K562 (cell line): ENCODE measurements at regions of chr2 and their contacts with region 1.

Region 1: DNA sequence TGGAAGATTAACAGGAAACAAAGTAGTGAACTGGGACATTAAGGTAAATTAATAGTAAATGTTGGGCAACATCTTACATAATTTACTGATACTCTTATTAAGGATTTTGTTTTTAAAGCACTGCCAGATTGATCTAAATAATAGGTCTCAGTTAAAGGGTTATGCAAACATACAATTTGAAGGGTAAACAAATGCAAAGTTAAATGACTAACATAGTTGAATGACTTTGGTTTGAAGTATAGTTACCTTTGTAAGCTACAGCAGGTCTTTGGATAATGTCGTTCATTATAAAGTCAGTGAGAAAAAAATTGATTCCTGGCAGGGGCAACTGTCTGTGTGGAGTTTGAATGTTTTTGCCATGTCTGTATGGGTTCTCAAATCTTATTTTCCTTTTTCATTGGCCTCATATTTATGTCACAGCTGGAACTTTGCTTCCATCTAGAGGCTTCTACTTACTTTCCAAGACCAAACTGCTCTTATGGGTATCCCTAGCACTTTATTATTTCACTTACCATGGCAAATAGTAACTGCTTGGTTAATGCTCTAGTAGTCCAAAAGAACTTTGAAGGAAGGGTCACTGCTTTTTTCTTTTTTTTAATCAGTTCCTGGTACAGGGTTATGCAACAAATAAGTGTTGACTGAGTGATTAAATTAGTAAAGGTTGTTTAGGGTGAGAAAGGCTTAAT is 107.8 kb downstream of the NBEAL1 start:
- DNase-seq: no peak
- ATAC-seq: no peak
- H3K4me3 ChIP-seq: no peak overlapping the region
- H3K27ac ChIP-seq: no peak overlapping the region
- H3K4me1 ChIP-seq: no peaks in the 10 kb centered on the region
- H3K27me3 ChIP-seq: no peaks in the 10 kb centered on the region
- CTCF ChIP-seq: peak in 1 of 3 experiments; percentile 33; a peak in 1 of 6 replicates
- EP300 ChIP-seq: no peak
- POLR2A ChIP-seq: no peak
- RAD21 ChIP-seq: peak; percentile 12 to 44; a peak in 3 of 4 replicates

Region 2: DNA sequence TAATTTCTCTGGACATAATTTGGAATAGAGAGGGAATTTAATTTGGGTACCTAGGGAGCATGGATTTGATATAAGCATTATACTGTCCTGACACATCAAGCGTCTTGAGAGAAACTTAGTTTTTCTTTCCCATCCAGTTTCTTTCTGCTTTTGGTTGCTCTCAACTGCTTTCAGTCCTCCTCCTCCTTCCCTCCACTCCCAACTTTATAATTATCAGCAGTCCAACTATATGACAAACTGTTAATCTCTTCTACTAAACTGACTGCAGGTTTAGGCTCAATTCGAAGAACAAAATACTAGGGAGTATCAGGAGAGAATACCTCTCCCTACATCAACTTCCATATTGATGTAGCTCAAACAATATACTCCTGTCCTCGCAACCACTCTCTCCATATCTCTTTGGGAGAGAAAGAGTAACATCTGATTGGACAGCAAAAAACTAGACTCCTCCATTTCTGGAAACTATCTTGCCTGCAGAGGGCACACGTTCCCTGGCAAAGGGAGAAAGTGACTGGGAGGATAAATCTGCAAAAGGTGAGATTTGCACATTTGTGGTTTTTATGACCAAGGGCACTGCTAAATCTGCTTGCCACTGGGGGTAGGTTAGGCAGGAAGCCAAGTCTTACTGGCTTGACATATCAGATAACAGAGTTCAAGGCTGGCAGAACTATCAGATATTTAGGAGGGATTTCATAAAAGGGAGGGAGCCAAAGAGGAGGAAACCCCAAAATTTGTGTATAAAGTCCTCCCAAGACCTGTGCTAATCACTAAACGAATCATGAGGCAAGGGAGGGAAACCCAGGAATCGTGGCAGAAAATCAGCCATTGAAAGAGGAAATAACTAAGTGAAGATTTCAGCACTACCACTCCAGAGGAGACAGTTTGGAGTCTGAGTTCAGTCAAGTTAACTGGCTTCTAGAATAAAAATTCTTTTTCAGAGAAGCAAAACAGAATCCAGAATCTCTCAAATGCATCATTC is 290.9 kb before region 1 on chr2:
- CTCF ChIA-PET with region 1: no interaction called
- POLR2A ChIA-PET with region 1: no interaction called
- in situ Hi-C with region 1: no loop called
- intact Hi-C with region 1: loop called (anchors 5 kb)
- DNase-seq: peak; percentile 21 to 62 (median 41)
- ATAC-seq: peak; percentile 90
- H3K4me3 ChIP-seq: no peak overlapping the region
- H3K27ac ChIP-seq: no peak overlapping the region
- H3K4me1 ChIP-seq: no peaks in the 10 kb centered on the region
- H3K27me3 ChIP-seq: no peaks in the 10 kb centered on the region
- CTCF ChIP-seq: peak; percentile 56 to 76 (median 59); a peak in 5 of 6 replicates
- EP300 ChIP-seq: no peak
- POLR2A ChIP-seq: no peak
- RAD21 ChIP-seq: peak; percentile 31 to 87

Region 3: DNA sequence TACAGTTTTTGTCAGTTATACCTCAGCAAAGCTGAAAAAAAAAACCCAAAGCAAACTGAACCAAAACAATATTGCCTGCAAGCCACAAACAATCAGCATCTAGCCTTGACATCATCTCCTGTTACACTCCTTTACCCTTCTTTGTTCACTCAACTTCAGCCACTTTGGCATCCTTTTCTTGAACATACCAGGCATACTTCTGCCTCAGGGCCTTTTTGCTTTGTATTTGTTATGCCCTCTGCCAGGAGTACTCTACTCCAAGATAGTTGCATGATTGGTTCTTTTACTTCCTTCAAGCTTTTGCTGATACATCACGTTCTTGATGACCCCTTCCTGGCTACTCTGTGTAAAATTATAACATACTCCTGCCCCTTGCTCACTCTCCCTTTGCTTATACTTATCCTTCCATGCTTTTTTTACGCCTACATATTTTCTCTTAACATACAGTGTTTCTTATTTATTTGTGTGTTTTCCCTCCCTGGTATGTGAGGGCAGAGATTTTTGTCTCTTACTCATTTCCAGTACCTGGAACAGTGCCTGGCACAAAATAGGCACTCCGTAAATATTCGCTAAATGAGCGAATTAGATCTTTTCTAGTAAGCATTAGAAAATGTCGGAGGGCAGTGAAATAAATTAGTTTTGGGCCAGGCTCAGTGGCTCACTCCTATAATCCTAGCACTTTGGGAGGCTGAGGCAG is 218.5 kb after region 1 on chr2:
- CTCF ChIA-PET with region 1: no interaction called
- POLR2A ChIA-PET with region 1: no interaction called
- in situ Hi-C with region 1: no loop called
- intact Hi-C with region 1: no loop called
- DNase-seq: no peak
- ATAC-seq: no peak
- H3K4me3 ChIP-seq: no peak overlapping the region
- H3K27ac ChIP-seq: no peak overlapping the region
- H3K4me1 ChIP-seq: peaks cover 0 to under 1% of the 10 kb centered on the region in 2 experiments; a peak in 2 of 5 replicates
- H3K27me3 ChIP-seq: no peaks in the 10 kb centered on the region
- CTCF ChIP-seq: no peak
- EP300 ChIP-seq: no peak
- POLR2A ChIP-seq: no peak
- RAD21 ChIP-seq: no peak